Left ventricle myocardium superior (tissue), 1 donor: ENCODE measurements at regions of chr1 and their contacts with region 1.

Region 1: DNA sequence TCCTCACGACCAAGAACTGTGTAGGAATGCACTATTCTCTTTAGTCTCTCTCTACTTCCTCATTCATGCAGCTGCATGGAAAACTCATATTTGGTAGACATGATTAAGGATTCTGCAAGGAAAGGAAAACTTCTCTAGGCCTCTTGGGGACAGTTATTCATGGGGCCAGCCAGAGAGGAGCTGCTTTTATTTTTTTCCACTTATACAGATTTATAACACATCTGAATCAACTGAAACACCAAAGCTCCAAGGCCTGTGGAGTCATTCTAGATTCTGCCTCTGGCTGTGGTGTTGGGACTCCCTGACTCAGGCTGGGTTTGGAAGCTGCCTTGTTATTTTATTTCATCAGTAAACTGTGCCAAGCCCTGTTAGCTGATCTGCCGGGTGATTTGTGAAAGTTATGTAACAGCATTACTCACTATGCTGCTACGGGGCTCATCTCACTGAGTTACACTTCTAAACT is 83.9 kb upstream of the EDEM3 start:
- DNase-seq: peak; percentile 45
- ATAC-seq: peak; percentile 89

Region 2: GRCh38 chr1:184881941-184882913 is 43.7 kb after region 1 on chr1:
- intact Hi-C with region 1: loop called (anchors 10 kb)
- DNase-seq: peak; percentile 38
- ATAC-seq: peak; percentile 79

Region 3: GRCh38 chr1:185170291-185170848 is 331.9 kb after region 1 on chr1:
- intact Hi-C with region 1: no loop called
- DNase-seq: no peak
- ATAC-seq: peak; percentile 61